ENCODE measurements at regions of chr4 and their contacts with region 1.

Region 1: DNA sequence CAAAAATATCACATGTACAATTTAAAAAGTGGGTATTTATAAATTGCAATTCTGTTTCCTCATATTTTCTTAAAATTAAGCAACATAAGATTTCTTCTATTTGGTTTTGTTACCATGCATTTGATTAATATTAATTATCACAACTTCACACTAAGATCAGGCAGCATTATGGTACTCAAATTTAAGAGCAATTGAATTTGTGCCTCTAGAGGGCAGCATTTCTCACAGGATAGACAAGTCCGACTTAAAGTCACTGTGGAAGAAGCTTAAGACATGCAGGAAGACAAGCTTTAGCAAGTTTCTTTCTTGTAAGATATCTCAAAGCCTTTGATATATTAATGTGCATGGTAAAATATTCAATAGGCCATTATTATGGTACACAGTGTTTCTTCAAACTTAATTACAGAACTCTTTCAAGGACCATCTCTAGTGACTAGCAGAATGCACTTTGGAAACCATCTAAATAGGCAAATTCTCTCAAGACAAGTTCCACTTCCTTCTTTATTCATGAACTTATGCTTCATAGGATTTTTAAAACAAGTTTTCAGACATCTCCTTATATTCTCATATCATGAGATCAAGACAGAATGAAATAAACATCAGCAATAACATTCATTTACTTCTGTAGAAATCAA is 35.0 kb downstream of the FBXW7 start:
- DNase-seq: peak; percentile 30
- H3K4me3 ChIP-seq: no peak overlapping the region
- H3K27ac ChIP-seq: peak overlapping the region in 1 of 4 donors; percentile 15
- H3K4me1 ChIP-seq: peaks cover 0 to 10% (median 0%) of the 10 kb centered on the region in 4 donors
- H3K27me3 ChIP-seq: no peaks in the 10 kb centered on the region
- CTCF ChIP-seq: peak; percentile 72 to 84 (median 81)
- EP300 ChIP-seq: no peak
- POLR2A ChIP-seq: no peak

Region 2: DNA sequence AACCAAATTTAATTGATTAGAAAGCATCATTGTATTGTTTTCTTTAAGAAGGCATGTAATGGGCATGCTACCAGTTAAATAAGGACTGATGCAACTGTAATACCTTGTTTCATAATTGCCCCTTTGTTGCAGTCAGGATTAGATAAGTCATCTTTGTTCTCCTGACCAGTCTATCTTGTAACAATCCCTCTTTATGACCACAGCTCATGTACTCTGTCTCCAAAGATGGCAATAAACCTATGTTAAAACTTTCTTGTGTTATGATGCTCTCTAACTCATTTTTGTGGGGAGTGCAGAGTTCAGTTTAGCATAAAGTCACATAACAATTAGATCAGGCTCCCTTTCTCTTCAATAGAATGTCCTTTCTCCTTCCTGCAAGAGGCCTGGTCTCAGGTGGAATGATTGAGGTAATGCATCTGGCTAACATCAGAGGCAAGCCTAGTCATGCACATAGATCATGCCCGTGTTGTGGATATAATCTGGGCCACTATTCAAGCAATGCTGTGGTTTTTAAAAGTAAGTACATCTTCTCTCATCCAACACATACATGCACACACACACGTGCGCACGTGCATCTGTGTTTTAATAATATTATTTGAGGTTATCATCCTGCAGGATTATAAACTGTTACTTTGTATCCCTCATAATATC is 133.3 kb after region 1 on chr4:
- in situ Hi-C with region 1: loop called (anchors 10 to 25 kb)
- intact Hi-C with region 1: loop called (anchors 1 kb)
- DNase-seq: no peak
- H3K4me3 ChIP-seq: no peak overlapping the region
- H3K27ac ChIP-seq: no peak overlapping the region
- H3K4me1 ChIP-seq: peaks cover 0 to 4% (median 0%) of the 10 kb centered on the region in 4 donors
- H3K27me3 ChIP-seq: no peaks in the 10 kb centered on the region
- CTCF ChIP-seq: no peak
- EP300 ChIP-seq: no peak
- POLR2A ChIP-seq: no peak

Region 3: DNA sequence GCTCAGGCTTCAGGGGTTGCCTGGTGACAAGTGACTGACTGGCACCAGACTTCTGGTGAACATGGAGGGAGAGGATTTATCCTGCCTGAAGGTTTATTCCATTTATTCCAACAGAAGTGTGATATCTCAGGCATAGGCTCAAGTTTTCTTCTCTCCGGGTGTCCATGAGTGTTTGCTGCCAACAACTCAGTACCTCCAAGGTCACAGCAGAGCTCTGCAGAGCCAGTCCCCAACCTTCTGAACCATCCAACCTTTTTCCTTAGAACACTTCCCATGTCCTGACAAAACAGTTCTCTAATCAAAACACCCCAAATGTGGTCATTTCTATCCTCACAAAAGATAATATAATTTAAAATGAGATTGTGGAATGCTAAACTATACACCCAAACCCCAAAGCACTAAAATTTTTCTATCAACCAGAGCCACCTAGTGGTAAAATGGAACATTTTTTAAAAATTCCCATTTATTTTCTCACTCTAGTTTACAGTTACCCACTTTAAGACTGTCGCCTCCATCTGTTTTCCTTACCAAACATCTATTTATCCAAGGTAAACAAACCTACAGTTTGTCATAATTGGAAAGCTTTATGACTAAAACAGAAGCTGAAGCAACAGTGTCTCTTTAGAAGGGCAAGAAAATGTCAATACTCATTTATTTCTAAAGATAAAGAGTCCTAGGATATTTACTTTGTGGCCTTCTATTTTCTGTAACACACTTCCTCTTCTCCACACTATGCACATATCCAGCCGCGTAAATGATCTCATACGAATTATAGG is 139.3 kb after region 1 on chr4:
- in situ Hi-C with region 1: loop called (anchors 10 to 25 kb)
- intact Hi-C with region 1: loop called (anchors 1 kb)
- DNase-seq: no peak
- H3K4me3 ChIP-seq: no peak overlapping the region
- H3K27ac ChIP-seq: no peak overlapping the region
- H3K4me1 ChIP-seq: peaks cover 0 to 20% (median 7%) of the 10 kb centered on the region in 4 donors
- H3K27me3 ChIP-seq: no peaks in the 10 kb centered on the region
- CTCF ChIP-seq: peak; percentile 63 to 72 (median 68)
- EP300 ChIP-seq: no peak
- POLR2A ChIP-seq: no peak

Region 4: GRCh38 chr4:152735396-152735859 is 234.5 kb after region 1 on chr4:
- in situ Hi-C with region 1: loop called in 3 of 4 experiments (anchors 5 to 10 kb)
- intact Hi-C with region 1: no loop called
- DNase-seq: no peak
- H3K4me3 ChIP-seq: no peak overlapping the region
- H3K27ac ChIP-seq: no peak overlapping the region
- H3K4me1 ChIP-seq: peaks cover 0 to 8% (median 3%) of the 10 kb centered on the region in 4 donors
- H3K27me3 ChIP-seq: no peaks in the 10 kb centered on the region
- CTCF ChIP-seq: peak; percentile 41 to 69 (median 59)
- EP300 ChIP-seq: no peak
- POLR2A ChIP-seq: no peak

Region 5: DNA sequence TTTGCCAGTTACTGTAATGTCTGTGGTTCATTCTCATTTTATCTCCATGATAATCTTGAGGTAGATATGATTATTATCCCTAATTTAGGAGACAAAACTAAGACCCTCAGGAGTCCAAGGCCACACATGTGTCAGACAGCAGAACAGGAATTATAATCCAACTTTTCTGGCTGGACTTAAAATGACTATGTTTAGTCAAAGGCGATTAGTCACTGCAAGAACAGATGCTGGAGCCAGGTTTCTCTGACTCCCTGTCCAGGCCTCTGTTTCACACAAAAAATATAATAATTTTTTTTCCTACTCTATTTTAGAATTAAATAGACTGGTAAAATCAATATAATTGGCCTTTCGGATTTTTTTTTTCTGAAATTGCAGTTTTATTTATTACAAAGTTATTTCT is 908.5 kb after region 1 on chr4:
- in situ Hi-C with region 1: no loop called
- intact Hi-C with region 1: no loop called
- DNase-seq: no peak
- H3K4me3 ChIP-seq: no peak overlapping the region
- H3K27ac ChIP-seq: no peak overlapping the region
- H3K4me1 ChIP-seq: peaks cover 0 to 14% (median 1%) of the 10 kb centered on the region in 4 donors
- H3K27me3 ChIP-seq: no peaks in the 10 kb centered on the region
- CTCF ChIP-seq: no peak
- EP300 ChIP-seq: no peak
- POLR2A ChIP-seq: no peak